ENCODE measurements at regions of chr6 and their contacts with region 1.

Region 1: GRCh38 chr6:90478789-90479602 is 107.9 kb downstream of the MAP3K7 start:
- DNase-seq: peak; percentile 70 to 89
- ATAC-seq: peak; percentile 98 to 100 (median 99)
- H3K4me3 ChIP-seq: no peak overlapping the region
- H3K27ac ChIP-seq: peak overlapping the region in 2 of 10 donors; percentile 24
- H3K4me1 ChIP-seq: peaks cover 0 to 9% (median 4%) of the 10 kb centered on the region in 9 donors
- H3K27me3 ChIP-seq: no peaks in the 10 kb centered on the region
- CTCF ChIP-seq: peak; percentile 89 to 95 (median 92)

Region 2: GRCh38 chr6:89819336-89820130 is 659.5 kb before region 1 on chr6 and contains the start of gene MDN1:
- intact Hi-C with region 1: no loop called
- DNase-seq: peak; percentile 89 to 92
- ATAC-seq: peak; percentile 99 to 100 (median 100)
- H3K4me3 ChIP-seq: peak within 1 kb of the TSS; percentile 46 to 98 (median 86)
- H3K27ac ChIP-seq: peak within 1 kb of the TSS in 9 of 10 donors; percentile 78 to 94 (median 84)
- H3K4me1 ChIP-seq: peaks cover 0 to 32% (median 22%) of the 10 kb centered on the region in 9 donors
- H3K27me3 ChIP-seq: no peaks in the 10 kb centered on the region
- CTCF ChIP-seq: no peak
- total RNA-seq, gene MDN1: 17.5 to 32.0 (median 27.5) TPM

Region 3: GRCh38 chr6:89934685-89935366 is 544.2 kb before region 1 on chr6:
- intact Hi-C with region 1: loop called (anchors 1 to 5 kb)
- DNase-seq: no peak
- ATAC-seq: no peak
- H3K4me3 ChIP-seq: no peak overlapping the region
- H3K27ac ChIP-seq: no peak overlapping the region
- H3K4me1 ChIP-seq: no peaks in the 10 kb centered on the region
- H3K27me3 ChIP-seq: no peaks in the 10 kb centered on the region
- CTCF ChIP-seq: no peak

Region 4: GRCh38 chr6:89970609-89971337 is 508.2 kb before region 1 on chr6:
- intact Hi-C with region 1: loop called in 4 of 10 experiments (anchors 1 to 10 kb)
- DNase-seq: peak; percentile 18 to 48
- ATAC-seq: peak; percentile 24 to 90 (median 79)
- H3K4me3 ChIP-seq: no peak overlapping the region
- H3K27ac ChIP-seq: no peak overlapping the region
- H3K4me1 ChIP-seq: peaks cover 7 to 31% (median 21%) of the 10 kb centered on the region in 9 donors
- H3K27me3 ChIP-seq: no peaks in the 10 kb centered on the region
- CTCF ChIP-seq: peak in 8 of 9 donors; percentile 20 to 80 (median 68)

Region 5: DNA sequence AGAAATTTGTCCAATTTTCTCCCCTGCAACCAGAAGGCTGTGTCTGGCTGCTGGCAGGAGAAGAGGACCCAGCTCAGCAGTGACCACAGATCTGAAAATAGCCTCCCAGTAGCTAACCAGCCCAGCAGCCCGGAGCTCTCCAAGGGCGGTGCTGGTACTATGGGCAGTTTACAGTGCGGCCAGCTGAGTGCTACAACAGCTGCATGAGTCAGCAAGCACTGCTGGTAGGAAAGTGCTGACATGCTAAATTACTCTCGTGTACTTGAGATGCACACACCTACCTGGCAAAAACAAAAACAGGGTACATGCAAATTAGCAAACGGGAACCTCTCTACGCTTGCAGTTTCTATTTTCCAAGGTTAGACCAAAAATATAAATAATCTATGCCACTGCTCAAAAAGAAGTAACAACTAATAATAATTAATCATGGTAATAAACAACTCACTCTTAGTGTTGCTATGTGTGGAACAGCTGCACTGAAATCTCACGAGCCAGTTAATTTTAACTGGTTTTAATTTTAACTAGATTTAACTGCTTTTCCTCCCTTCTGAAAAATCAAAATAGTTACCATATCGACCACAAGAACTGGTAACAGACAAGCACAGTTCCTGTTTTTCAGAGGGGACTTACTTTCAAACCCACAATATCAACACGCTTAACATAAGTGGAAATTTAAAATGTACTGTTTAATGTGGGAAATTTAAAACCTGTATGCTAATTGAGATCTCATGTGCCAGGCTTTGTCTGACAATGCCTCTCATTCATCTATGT is 193.2 kb before region 1 on chr6:
- intact Hi-C with region 1: loop called in 5 of 10 experiments (anchors 5 to 10 kb)
- DNase-seq: peak; percentile 77 to 88
- ATAC-seq: peak; percentile 95 to 100 (median 98)
- H3K4me3 ChIP-seq: peak overlapping the region in 6 of 10 donors; percentile 30 to 46 (median 40)
- H3K27ac ChIP-seq: peak overlapping the region in 9 of 10 donors; percentile 3 to 76 (median 61)
- H3K4me1 ChIP-seq: peaks cover 3 to 33% (median 26%) of the 10 kb centered on the region in 9 donors
- H3K27me3 ChIP-seq: no peaks in the 10 kb centered on the region
- CTCF ChIP-seq: no peak

Region 6: GRCh38 chr6:90304308-90304707 is 174.7 kb before region 1 on chr6:
- intact Hi-C with region 1: loop called in 7 of 10 experiments (anchors 5 to 10 kb)
- DNase-seq: no peak
- ATAC-seq: no peak
- H3K4me3 ChIP-seq: no peak overlapping the region
- H3K27ac ChIP-seq: no peak overlapping the region
- H3K4me1 ChIP-seq: peaks cover 0 to 6% (median 0%) of the 10 kb centered on the region in 9 donors
- H3K27me3 ChIP-seq: peaks cover 0 to 15% (median 0%) of the 10 kb centered on the region in 7 donors
- CTCF ChIP-seq: no peak

Region 7: DNA sequence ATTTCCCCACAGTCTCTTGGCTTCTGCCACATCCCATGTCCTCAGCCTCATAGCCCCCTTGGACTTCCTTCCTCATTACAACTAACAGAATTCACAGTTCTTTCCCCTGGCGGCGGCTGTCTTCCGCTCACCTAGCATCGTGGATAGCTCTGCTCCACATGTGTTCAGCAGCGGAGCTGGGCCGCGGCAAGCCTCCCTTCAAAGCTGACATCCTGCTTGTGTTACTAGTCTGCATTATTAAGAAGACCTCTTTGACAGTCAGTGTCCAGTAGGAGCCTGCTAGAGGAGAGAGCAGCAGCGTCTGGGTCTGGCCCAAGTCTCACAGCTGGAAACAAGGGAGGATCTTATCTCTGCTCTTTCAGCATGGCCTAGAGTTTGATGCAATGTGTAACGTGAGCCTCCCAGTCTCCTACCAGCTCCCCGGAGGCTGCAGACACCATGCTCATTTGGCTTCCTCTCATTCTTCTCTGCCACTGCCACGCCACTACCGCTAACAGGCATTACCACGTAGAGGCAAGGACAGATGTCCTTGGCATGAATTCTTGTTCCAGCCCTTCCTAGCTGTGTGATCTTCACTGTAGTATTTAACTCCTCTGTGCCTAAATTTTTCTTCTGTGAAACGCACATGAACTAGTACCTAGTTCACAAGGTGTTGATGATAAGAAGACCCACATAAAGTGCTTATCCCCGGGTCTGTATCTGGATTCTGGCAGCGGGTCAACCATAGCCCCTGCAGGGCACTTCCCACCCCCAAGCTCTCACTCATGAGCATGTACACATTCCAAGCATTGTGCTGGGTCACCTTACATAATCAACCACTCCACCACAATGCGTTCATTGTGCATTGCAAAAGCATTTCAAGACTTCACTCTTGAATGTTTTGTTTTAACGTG is 75.3 kb before region 1 on chr6:
- intact Hi-C with region 1: loop called in 4 of 10 experiments (anchors 5 kb)
- DNase-seq: peak in 1 of 2 donors; percentile 23
- ATAC-seq: peak in 7 of 8 donors; percentile 49 to 89 (median 61)
- H3K4me3 ChIP-seq: no peak overlapping the region
- H3K27ac ChIP-seq: peak overlapping the region in 1 of 10 donors; percentile 6
- H3K4me1 ChIP-seq: peaks cover 0 to 17% (median 8%) of the 10 kb centered on the region in 9 donors
- H3K27me3 ChIP-seq: peaks cover 0 to 14% (median 0%) of the 10 kb centered on the region in 7 donors
- CTCF ChIP-seq: no peak